Aorta (tissue), 5 donors: ENCODE measurements at regions of chr4 and their contacts with region 1.

Region 1: DNA sequence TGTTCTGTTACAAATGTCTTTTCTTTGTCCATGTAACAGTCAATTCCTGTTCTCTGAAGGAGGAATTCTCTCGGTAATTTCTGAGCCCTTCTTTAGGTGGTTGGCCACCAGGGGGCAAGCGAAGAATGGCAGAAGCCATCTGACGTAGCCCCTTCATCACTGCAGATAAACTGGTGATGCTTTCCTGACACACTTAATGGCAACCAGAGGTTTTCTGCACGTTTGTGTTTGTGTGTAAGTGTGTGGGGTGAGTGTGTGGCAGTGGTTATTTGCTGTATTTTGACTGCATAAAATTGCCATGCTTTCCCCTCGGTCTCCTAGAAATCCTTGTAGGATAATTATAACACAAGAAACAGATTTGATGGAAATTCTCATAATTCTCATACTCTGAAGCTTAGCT is 64.8 kb upstream of the STOX2 start:
- DNase-seq: peak; percentile 84 to 91
- ATAC-seq: peak; percentile 88
- H3K4me3 ChIP-seq: no peak overlapping the region
- H3K27ac ChIP-seq: no peak overlapping the region
- H3K4me1 ChIP-seq: no peaks in the 10 kb centered on the region
- H3K27me3 ChIP-seq: no peaks in the 10 kb centered on the region

Region 2: DNA sequence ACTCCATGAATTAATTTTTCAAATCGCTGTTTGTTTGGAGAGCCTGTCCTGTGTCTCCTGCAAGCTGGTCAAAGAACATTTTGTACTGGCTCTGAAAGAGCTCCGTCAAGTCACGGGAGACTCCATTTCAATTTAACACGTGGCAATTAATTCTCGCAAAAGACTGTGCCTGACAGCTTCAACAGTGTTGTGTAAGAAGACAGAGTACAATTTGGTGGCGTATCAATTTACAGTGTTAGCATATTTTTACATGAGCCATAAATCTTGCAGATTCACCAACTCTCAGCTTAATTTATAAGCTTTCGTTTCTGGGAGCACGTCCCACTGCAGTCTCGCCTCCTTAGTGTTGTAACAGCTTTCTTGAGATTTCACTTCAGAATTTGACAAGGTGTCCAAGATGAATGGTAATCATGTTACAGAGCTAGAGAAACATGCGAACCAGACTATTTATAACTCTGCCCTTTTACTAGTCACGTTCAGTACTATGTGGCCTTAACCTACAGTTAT is 252.1 kb before region 1 on chr4:
- intact Hi-C with region 1: no loop called
- DNase-seq: no peak
- ATAC-seq: peak; percentile 89
- H3K4me3 ChIP-seq: peak overlapping the region; percentile 17 to 73
- H3K27ac ChIP-seq: no peak overlapping the region
- H3K4me1 ChIP-seq: no peaks in the 10 kb centered on the region
- H3K27me3 ChIP-seq: no peaks in the 10 kb centered on the region

Region 3: GRCh38 chr4:183700404-183700803 is 139.9 kb before region 1 on chr4:
- intact Hi-C with region 1: no loop called
- DNase-seq: no peak
- ATAC-seq: no peak
- H3K4me3 ChIP-seq: no peak overlapping the region
- H3K27ac ChIP-seq: no peak overlapping the region
- H3K4me1 ChIP-seq: no peaks in the 10 kb centered on the region
- H3K27me3 ChIP-seq: no peaks in the 10 kb centered on the region

Region 4: DNA sequence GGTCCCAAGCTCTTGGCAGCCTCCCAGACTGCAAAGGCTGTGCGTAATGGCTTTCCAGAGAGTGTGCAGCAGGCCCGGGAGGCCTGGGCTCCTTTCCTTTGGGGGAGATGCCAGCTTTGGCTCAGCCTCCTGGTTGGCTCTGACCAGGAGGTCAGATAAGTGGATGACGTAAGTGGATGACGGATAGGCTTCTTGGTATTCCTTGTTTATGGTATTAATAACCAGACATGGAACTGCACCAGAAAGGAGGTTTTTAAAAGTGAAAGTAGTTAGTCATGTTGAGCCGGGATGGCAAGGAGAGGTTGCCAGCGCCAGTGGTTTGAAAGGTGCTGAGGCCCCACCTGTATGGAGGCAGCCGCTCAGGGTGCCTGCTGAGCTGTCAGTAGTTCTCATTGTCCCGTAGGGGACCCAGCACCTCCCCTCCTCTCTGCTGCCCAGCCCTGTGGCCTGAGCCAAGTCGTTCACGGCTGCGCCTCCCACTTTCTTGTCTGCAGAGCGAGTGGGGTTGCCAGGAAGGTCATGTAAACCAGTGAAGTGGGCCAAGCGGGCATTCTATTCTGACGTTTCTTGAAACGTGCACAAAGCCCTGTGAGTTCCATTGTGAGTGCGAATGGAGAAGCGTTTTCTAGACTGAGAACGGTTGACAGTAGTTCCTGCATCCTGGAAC is 36.1 kb after region 1 on chr4:
- intact Hi-C with region 1: loop called in 1 of 2 experiments (anchors 5 kb)
- DNase-seq: peak; percentile 83 to 94
- ATAC-seq: peak; percentile 93
- H3K4me3 ChIP-seq: peak overlapping the region in 1 of 2 donors; percentile 10
- H3K27ac ChIP-seq: peak overlapping the region; percentile 0 to 32
- H3K4me1 ChIP-seq: no peaks in the 10 kb centered on the region
- H3K27me3 ChIP-seq: no peaks in the 10 kb centered on the region

Region 5: DNA sequence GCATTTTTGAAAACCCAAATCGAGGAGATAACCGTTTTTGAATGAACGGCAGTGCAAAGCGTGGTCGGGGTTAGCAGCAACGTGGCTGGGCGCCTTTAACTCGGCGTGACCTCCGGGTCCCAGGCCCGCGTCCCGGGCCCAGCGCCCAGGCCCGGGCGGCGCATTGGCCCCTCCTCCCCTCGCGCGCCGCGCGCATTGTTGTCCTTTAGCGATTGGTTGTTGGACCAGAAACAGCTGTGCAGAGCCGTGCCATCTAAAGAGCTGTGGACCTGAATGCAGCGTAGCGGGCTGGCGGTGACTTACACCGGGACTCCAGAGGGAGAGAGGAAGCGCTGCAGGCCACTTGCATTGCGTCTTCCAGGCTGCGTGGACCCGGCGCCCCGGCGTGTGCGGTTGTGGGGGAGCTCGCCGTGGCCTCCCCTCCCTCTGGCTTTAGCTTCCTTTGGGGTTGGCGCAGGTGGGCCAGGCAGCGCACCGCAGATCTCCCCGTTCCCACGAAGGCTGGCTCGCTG is 64.8 kb after region 1 on chr4 and contains the start of gene STOX2:
- intact Hi-C with region 1: loop called (anchors 5 kb)
- DNase-seq: peak; percentile 76 to 89
- ATAC-seq: peak; percentile 89
- H3K4me3 ChIP-seq: peak within 1 kb of the TSS; percentile 78 to 80
- H3K27ac ChIP-seq: peak within 1 kb of the TSS in 1 of 2 donors; percentile 28
- H3K4me1 ChIP-seq: no peaks in the 10 kb centered on the region
- H3K27me3 ChIP-seq: no peaks in the 10 kb centered on the region
- total RNA-seq, gene STOX2: 5.7 to 10.9 TPM

Region 6: DNA sequence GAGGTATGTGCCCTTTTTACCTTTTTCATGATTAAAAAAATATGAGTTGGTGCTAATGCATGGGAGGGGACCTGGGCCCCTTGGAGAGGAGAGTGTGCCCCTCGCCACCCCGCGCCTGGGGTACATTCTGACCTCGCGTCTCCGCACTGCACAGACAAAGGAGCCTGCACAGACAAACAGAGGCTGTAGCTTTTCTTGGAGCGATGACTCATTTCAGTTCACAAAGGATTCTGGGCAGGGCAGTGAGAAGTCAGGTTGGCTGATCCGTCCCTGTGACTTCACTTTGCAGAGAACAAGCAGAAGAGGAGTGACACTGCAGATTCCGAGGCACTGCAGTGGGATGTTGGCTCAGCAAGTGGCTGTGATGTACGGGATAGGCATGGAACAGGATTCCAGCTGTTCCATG is 147.7 kb after region 1 on chr4:
- intact Hi-C with region 1: loop called (anchors 10 kb)
- DNase-seq: peak; percentile 74 to 78
- ATAC-seq: peak; percentile 90
- H3K4me3 ChIP-seq: peak overlapping the region in 1 of 2 donors; percentile 11
- H3K27ac ChIP-seq: peak overlapping the region; percentile 7 to 29
- H3K4me1 ChIP-seq: no peaks in the 10 kb centered on the region
- H3K27me3 ChIP-seq: no peaks in the 10 kb centered on the region

Region 7: DNA sequence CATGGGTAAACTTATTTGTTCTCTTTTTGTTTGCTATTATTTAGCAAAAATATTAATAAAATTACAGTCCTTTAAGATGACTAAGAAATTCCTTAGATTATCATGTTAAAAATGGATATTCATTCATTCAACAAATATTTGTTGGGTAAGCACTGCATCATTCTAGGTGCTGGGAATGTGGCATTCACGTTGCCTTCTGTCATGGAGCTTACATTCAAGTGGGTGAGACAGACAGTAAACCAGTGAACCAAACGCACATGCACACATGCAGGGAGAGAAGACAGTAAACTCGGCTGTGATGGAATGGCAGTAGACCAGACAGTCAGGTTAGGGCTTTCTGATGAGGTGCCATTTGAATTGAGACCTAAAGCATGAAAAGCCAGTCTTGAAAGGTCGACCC is 156.6 kb after region 1 on chr4:
- intact Hi-C with region 1: loop called in 1 of 2 experiments (anchors 10 kb)
- DNase-seq: no peak
- ATAC-seq: no peak
- H3K4me3 ChIP-seq: no peak overlapping the region
- H3K27ac ChIP-seq: no peak overlapping the region
- H3K4me1 ChIP-seq: peaks cover 0 to 3% of the 10 kb centered on the region in 2 donors
- H3K27me3 ChIP-seq: no peaks in the 10 kb centered on the region

Region 8: DNA sequence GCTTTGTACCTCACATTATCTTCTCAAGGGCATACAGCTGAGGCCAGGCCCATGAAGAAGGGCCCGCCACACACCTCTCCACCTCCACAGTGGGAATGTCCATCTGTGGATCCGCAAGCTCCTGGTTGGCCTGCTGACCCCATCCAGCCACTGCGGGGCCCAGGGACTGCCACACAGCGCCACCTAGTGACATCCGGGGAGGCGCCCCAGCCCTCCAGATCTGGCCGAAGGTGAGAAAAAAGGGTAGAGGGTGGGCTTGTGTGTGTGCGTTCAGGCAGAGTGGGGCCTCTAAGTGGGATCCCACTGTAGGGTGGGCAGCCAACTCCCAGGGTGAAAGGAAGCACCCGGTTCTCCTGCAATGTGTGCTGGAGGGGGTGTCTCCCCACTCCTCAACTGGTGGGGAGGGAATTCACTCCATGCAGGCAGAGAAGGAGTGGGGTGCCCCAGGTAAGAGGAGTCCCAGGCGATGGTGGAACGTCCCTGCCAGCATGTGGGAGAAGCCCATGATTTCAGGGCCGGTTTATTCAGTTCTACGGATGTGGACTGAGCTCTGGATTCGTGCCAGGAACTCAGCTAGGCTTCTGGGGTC is 260.1 kb after region 1 on chr4:
- intact Hi-C with region 1: loop called (anchors 5 to 10 kb)
- DNase-seq: no peak
- ATAC-seq: no peak
- H3K4me3 ChIP-seq: no peak overlapping the region
- H3K27ac ChIP-seq: no peak overlapping the region
- H3K4me1 ChIP-seq: no peaks in the 10 kb centered on the region
- H3K27me3 ChIP-seq: no peaks in the 10 kb centered on the region

Region 9: DNA sequence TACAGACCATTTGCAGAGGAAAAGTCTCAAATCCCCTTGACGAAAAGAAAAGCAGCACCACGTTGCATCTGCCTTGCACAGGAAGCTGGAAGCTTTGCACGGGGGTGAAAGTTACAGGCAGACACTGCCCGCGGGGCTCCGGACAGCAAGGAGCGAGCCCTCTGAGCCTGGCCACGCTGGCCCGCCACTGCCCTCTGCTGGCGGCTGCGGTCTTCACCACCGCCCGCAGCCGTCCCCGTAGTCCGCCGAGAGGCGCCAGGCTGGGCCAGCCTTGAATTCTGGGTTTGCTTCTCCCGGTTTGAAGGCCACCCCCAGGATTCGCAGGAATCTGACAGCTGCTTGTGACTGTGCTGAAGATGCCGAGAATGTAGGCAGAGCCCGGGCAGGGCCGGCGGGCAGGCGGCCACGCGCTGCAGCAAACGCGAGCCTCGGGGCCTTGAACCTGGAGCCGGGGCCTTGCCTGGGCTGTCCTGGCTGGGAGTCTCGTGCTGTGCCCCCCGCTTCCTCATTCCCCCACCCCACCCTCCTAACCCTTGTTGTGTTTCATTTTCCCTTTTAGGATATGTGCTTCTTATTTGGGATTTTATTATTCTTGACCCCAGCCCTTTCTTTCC is 328.2 kb after region 1 on chr4:
- intact Hi-C with region 1: loop called (anchors 1 to 2 kb)
- DNase-seq: peak; percentile 75 to 92
- ATAC-seq: peak; percentile 94
- H3K4me3 ChIP-seq: no peak overlapping the region
- H3K27ac ChIP-seq: no peak overlapping the region
- H3K4me1 ChIP-seq: no peaks in the 10 kb centered on the region
- H3K27me3 ChIP-seq: no peaks in the 10 kb centered on the region